Natural killer cell (primary cell): ENCODE measurements at regions of chr10 and their contacts with region 1.

Region 1: DNA sequence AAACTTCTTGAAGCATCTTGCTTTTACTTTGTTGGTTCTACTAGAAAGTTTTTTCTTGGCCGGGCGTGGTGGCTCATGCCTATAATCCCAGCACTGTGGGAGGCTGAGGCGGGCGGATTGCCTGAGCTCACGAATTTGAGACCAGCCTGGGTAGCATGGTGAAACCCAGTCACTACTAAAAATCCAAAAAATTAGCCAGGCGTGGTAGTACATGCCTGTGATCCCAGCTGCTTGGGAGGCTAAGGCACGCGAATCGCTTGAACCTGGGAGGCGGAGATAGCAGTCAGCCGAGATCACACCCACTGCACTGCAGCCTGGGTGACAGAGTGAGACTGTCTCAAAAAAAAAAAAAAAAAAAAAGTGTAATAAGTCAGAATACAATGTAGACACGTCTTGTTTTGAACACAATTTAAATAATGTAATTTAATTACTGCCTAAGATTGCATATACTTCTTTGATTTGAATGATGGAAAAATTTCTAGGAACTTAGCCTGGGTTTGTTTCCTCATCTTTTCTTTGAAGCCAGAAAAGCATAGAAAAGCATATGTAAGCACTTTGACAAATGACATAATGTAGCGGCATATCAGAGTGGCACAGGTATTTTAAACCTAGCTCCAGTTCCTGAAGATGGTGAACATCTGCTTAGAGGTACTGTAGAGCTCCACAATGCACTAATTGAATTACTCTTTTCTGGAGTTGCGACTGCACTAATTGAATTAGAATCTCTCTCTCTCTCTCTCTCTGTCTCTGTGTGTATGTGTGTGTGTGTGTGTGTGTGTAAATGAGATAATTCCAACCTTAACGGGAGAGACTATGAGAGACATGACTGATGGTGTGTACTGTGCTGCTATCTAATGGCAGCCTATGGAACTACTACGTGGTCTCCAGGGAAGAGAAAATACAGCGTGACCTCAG is 87.8 kb downstream of the BTRC start:
- DNase-seq: peak in 1 of 2 donors; percentile 57
- ATAC-seq: peak; percentile 71 to 85 (median 79)
- H3K4me3 ChIP-seq: no peak overlapping the region
- H3K4me3 Mint-ChIP-seq: no peak overlapping the region
- H3K27ac ChIP-seq: no peak overlapping the region
- H3K27ac Mint-ChIP-seq: no peak overlapping the region
- H3K4me1 ChIP-seq: no peaks in the 10 kb centered on the region
- H3K4me1 Mint-ChIP-seq: peaks cover 0 to 5% of the 10 kb centered on the region in 2 donors
- H3K27me3 ChIP-seq: no peaks in the 10 kb centered on the region
- H3K27me3 Mint-ChIP-seq: no peaks in the 10 kb centered on the region
- CTCF ChIP-seq: no peak

Region 2: GRCh38 chr10:101272229-101272868 is 169.4 kb before region 1 on chr10:
- intact Hi-C with region 1: loop called (anchors 1 kb)
- DNase-seq: peak; percentile 41 to 75
- ATAC-seq: peak; percentile 48 to 75 (median 74)
- H3K4me3 ChIP-seq: no peak overlapping the region
- H3K4me3 Mint-ChIP-seq: no peak overlapping the region
- H3K27ac ChIP-seq: no peak overlapping the region
- H3K27ac Mint-ChIP-seq: no peak overlapping the region
- H3K4me1 ChIP-seq: peaks cover 4% of the 10 kb centered on the region
- H3K4me1 Mint-ChIP-seq: peaks cover 5 to 7% of the 10 kb centered on the region in 2 donors
- H3K27me3 ChIP-seq: peaks cover 4% of the 10 kb centered on the region
- H3K27me3 Mint-ChIP-seq: peaks cover 25 to 48% of the 10 kb centered on the region in 2 donors
- CTCF ChIP-seq: peak; percentile 66